CD4-positive, alpha-beta T cell (primary cell): ENCODE measurements at regions of chr12 and their contacts with region 1.

Region 1: GRCh38 chr12:57899010-57899662 is 42.2 kb upstream of the ATP23 start:
- DNase-seq: peak; percentile 62 to 94 (median 74)
- ATAC-seq: peak; percentile 88
- H3K4me3 ChIP-seq: no peak overlapping the region
- H3K4me3 Mint-ChIP-seq: peak overlapping the region; percentile 87
- H3K27ac ChIP-seq: peak overlapping the region; percentile 75 to 81
- H3K27ac Mint-ChIP-seq: peak overlapping the region; percentile 94
- H3K4me1 ChIP-seq: peaks cover 61% of the 10 kb centered on the region
- H3K4me1 Mint-ChIP-seq: peaks cover 61% of the 10 kb centered on the region
- H3K27me3 ChIP-seq: no peaks in the 10 kb centered on the region
- H3K27me3 Mint-ChIP-seq: no peaks in the 10 kb centered on the region
- CTCF ChIP-seq: no peak

Region 2: DNA sequence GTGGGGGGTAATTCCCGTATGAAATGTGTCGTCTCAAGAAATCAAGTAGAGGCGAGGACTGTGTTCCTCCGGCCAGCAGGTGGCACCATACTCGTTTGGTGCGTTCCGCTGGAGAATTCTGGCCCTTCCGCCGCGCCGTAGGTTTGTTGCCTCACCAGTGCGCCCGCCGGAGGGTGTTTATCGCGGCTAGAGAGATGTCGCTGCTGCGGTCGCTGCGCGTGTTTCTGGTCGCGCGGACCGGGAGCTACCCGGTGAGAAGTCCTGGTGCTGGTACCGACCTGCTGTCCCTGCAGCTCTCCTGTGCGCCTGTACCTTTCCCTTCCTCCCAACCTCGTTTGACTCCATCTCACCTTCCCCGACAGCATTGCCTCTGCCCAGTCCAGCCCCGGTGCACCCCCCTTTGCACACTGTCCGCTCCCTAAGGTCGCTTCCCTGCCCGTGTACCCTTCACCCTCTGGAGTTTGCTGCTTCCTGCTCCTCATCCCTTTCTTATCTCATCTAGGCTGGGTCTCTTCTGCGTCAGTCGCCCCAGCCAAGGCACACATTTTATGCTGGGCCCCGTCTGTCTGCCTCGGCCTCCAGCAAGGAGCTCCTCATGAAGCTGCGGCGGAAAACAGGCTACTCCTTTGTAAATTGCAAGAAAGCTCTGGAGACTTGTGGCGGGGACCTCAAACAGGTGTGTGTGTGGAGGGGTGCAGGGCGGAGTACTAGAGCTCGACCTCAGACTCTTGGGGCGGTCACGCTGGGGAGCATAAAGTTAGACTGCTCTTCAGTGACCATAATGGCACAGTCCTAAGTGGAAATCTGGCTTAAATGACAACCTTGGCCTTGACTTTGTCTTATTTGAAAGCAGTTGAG is 116.3 kb before region 1 on chr12 and contains the start of gene TSFM:
- CTCF ChIA-PET with region 1: interaction called, 4 read pairs
- POLR2A ChIA-PET with region 1: interaction called, 4 read pairs
- intact Hi-C with region 1: loop called in 1 of 2 experiments (anchors 2 kb)
- DNase-seq: peak; percentile 93 to 99 (median 98)
- ATAC-seq: peak; percentile 93
- H3K4me3 ChIP-seq: peak within 1 kb of the TSS; percentile 89
- H3K4me3 Mint-ChIP-seq: peak within 1 kb of the TSS; percentile 100
- H3K27ac ChIP-seq: peak within 1 kb of the TSS; percentile 51 to 78
- H3K27ac Mint-ChIP-seq: peak within 1 kb of the TSS; percentile 100
- H3K4me1 ChIP-seq: peaks cover 58% of the 10 kb centered on the region
- H3K4me1 Mint-ChIP-seq: peaks cover 47% of the 10 kb centered on the region
- H3K27me3 ChIP-seq: no peaks in the 10 kb centered on the region
- H3K27me3 Mint-ChIP-seq: no peaks in the 10 kb centered on the region
- CTCF ChIP-seq: peak; percentile 90
- total RNA-seq, gene TSFM: 25.8 to 26.9 TPM

Region 3: DNA sequence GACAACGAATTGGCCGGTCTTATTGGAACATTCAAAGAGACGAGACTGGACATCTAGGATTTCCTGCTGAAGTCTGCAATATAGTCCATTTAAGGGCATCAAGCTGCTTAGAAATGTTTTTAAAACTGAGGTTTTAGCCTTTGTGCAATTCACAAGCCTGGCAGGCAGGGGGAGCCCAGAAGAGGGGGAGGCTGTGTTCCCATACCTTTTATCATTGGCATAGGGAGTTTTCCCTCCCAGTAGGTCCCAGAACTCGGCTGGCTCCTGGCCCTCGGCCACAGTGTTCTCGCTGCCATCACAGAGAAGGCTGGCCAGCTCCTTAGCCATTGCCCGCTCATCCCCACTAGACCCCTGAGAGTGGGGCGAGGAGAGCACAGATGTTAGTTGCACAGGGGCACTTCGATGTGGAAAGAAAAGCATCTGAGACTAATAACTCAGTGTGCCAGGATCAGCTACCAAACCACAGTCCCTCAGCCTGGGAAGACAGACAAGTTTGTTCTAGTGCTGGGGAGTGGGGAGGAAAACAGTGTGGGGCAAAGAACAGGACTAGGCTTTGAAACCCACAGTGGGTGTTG is 95.7 kb before region 1 on chr12:
- CTCF ChIA-PET with region 1: interaction called, 11 read pairs
- POLR2A ChIA-PET with region 1: interaction called, 4 read pairs
- intact Hi-C with region 1: loop called in 1 of 2 experiments (anchors 2 kb)
- DNase-seq: peak in 13 of 14 experiments; percentile 10 to 58 (median 29)
- ATAC-seq: no peak
- H3K4me3 ChIP-seq: no peak overlapping the region
- H3K4me3 Mint-ChIP-seq: no peak overlapping the region
- H3K27ac ChIP-seq: no peak overlapping the region
- H3K27ac Mint-ChIP-seq: no peak overlapping the region
- H3K4me1 ChIP-seq: no peaks in the 10 kb centered on the region
- H3K4me1 Mint-ChIP-seq: no peaks in the 10 kb centered on the region
- H3K27me3 ChIP-seq: no peaks in the 10 kb centered on the region
- H3K27me3 Mint-ChIP-seq: no peaks in the 10 kb centered on the region
- CTCF ChIP-seq: peak; percentile 76

Region 4: GRCh38 chr12:57836442-57837375 is 62.4 kb before region 1 on chr12:
- CTCF ChIA-PET with region 1: interaction called, 6 read pairs
- POLR2A ChIA-PET with region 1: interaction called, 47 read pairs
- intact Hi-C with region 1: no loop called
- DNase-seq: peak in 6 of 14 experiments; percentile 26 to 73 (median 54)
- ATAC-seq: peak; percentile 15
- H3K4me3 ChIP-seq: peak overlapping the region; percentile 31
- H3K4me3 Mint-ChIP-seq: peak overlapping the region; percentile 74
- H3K27ac ChIP-seq: peak overlapping the region; percentile 71 to 79
- H3K27ac Mint-ChIP-seq: peak overlapping the region; percentile 92
- H3K4me1 ChIP-seq: peaks cover 99% of the 10 kb centered on the region
- H3K4me1 Mint-ChIP-seq: peaks cover 98% of the 10 kb centered on the region
- H3K27me3 ChIP-seq: no peaks in the 10 kb centered on the region
- H3K27me3 Mint-ChIP-seq: no peaks in the 10 kb centered on the region
- CTCF ChIP-seq: no peak

Region 5: GRCh38 chr12:57888409-57889157 is 10.6 kb before region 1 on chr12:
- CTCF ChIA-PET with region 1: interaction called, 4 read pairs
- POLR2A ChIA-PET with region 1: interaction called, 20 read pairs
- intact Hi-C with region 1: no loop called
- DNase-seq: peak in 11 of 14 experiments; percentile 12 to 63 (median 41)
- ATAC-seq: peak; percentile 95
- H3K4me3 ChIP-seq: no peak overlapping the region
- H3K4me3 Mint-ChIP-seq: no peak overlapping the region
- H3K27ac ChIP-seq: no peak overlapping the region
- H3K27ac Mint-ChIP-seq: peak overlapping the region; percentile 68
- H3K4me1 ChIP-seq: peaks cover 26% of the 10 kb centered on the region
- H3K4me1 Mint-ChIP-seq: peaks cover 13% of the 10 kb centered on the region
- H3K27me3 ChIP-seq: peaks cover 0 to 4% of the 10 kb centered on the region in 2 experiments
- H3K27me3 Mint-ChIP-seq: no peaks in the 10 kb centered on the region
- CTCF ChIP-seq: no peak

Region 6: GRCh38 chr12:57954768-57955167 is 55.6 kb after region 1 on chr12:
- CTCF ChIA-PET with region 1: no interaction called
- POLR2A ChIA-PET with region 1: no interaction called
- intact Hi-C with region 1: no loop called
- DNase-seq: no peak
- ATAC-seq: no peak
- H3K4me3 ChIP-seq: no peak overlapping the region
- H3K4me3 Mint-ChIP-seq: no peak overlapping the region
- H3K27ac ChIP-seq: no peak overlapping the region
- H3K27ac Mint-ChIP-seq: no peak overlapping the region
- H3K4me1 ChIP-seq: no peaks in the 10 kb centered on the region
- H3K4me1 Mint-ChIP-seq: no peaks in the 10 kb centered on the region
- H3K27me3 ChIP-seq: no peaks in the 10 kb centered on the region
- H3K27me3 Mint-ChIP-seq: no peaks in the 10 kb centered on the region
- CTCF ChIP-seq: no peak